Activated naive CD4-positive, alpha-beta T cell treated with anti-CD3 and anti-CD28 coated beads for 36 hours (primary cell): ENCODE measurements at regions of chr3 and their contacts with region 1.

Region 1: GRCh38 chr3:138915503-138916498 is 31.1 kb downstream of the FOXL2 start:
- DNase-seq: peak; percentile 89
- H3K4me3 Mint-ChIP-seq: peak overlapping the region; percentile 81
- H3K27ac Mint-ChIP-seq: peak overlapping the region; percentile 24
- H3K4me1 Mint-ChIP-seq: peaks cover 4% of the 10 kb centered on the region
- H3K27me3 Mint-ChIP-seq: no peaks in the 10 kb centered on the region

Region 2: GRCh38 chr3:138180375-138181029 is 735.3 kb before region 1 on chr3:
- CTCF ChIA-PET with region 1: interaction called, 7 read pairs
- intact Hi-C with region 1: loop called (anchors 1 kb)
- DNase-seq: peak; percentile 76
- H3K4me3 Mint-ChIP-seq: no peak overlapping the region
- H3K27ac Mint-ChIP-seq: no peak overlapping the region
- H3K4me1 Mint-ChIP-seq: peaks cover 3% of the 10 kb centered on the region
- H3K27me3 Mint-ChIP-seq: peaks cover 1% of the 10 kb centered on the region

Region 3: GRCh38 chr3:138479438-138479863 is 436.4 kb before region 1 on chr3:
- CTCF ChIA-PET with region 1: interaction called, 29 read pairs
- intact Hi-C with region 1: loop called (anchors 1 kb)
- DNase-seq: peak; percentile 65
- H3K4me3 Mint-ChIP-seq: no peak overlapping the region
- H3K27ac Mint-ChIP-seq: no peak overlapping the region
- H3K4me1 Mint-ChIP-seq: no peaks in the 10 kb centered on the region
- H3K27me3 Mint-ChIP-seq: no peaks in the 10 kb centered on the region

Region 4: DNA sequence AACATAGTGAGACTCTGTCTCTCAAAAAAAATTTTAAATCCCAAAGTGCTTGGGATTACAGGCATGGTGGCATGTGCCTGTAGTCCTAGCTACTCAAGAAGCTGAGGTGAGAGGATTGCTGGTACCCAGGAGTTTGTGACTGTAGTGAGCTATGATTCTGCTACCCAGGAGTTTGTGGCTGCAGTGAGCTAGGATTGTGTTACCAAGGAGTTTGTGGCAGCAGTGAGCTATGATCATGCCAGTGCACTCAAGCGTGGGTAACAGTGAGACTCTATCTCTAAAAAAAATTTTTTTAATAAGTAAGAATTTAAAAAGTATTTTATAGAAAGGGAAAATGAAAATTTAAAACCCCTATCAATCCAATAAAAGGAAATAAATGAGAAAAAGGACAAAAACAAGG is 237.7 kb before region 1 on chr3:
- CTCF ChIA-PET with region 1: interaction called, 14 read pairs
- intact Hi-C with region 1: no loop called
- DNase-seq: no peak
- H3K4me3 Mint-ChIP-seq: no peak overlapping the region
- H3K27ac Mint-ChIP-seq: no peak overlapping the region
- H3K4me1 Mint-ChIP-seq: no peaks in the 10 kb centered on the region
- H3K27me3 Mint-ChIP-seq: no peaks in the 10 kb centered on the region

Region 5: GRCh38 chr3:138717348-138717747 is 198.5 kb before region 1 on chr3:
- CTCF ChIA-PET with region 1: interaction called, 12 read pairs
- intact Hi-C with region 1: no loop called
- DNase-seq: no peak
- H3K4me3 Mint-ChIP-seq: no peak overlapping the region
- H3K27ac Mint-ChIP-seq: no peak overlapping the region
- H3K4me1 Mint-ChIP-seq: peaks cover 31% of the 10 kb centered on the region
- H3K27me3 Mint-ChIP-seq: no peaks in the 10 kb centered on the region

Region 6: GRCh38 chr3:138842483-138843188 is 73.2 kb before region 1 on chr3:
- CTCF ChIA-PET with region 1: interaction called, 15 read pairs
- intact Hi-C with region 1: no loop called
- DNase-seq: no peak
- H3K4me3 Mint-ChIP-seq: no peak overlapping the region
- H3K27ac Mint-ChIP-seq: no peak overlapping the region
- H3K4me1 Mint-ChIP-seq: no peaks in the 10 kb centered on the region
- H3K27me3 Mint-ChIP-seq: no peaks in the 10 kb centered on the region

Region 7: GRCh38 chr3:138935848-138936740 is 20.3 kb after region 1 on chr3:
- CTCF ChIA-PET with region 1: interaction called, 113 read pairs
- intact Hi-C with region 1: no loop called
- DNase-seq: peak; percentile 78
- H3K4me3 Mint-ChIP-seq: peak overlapping the region; percentile 71
- H3K27ac Mint-ChIP-seq: no peak overlapping the region
- H3K4me1 Mint-ChIP-seq: peaks cover 34% of the 10 kb centered on the region
- H3K27me3 Mint-ChIP-seq: peaks cover 70% of the 10 kb centered on the region

Region 8: DNA sequence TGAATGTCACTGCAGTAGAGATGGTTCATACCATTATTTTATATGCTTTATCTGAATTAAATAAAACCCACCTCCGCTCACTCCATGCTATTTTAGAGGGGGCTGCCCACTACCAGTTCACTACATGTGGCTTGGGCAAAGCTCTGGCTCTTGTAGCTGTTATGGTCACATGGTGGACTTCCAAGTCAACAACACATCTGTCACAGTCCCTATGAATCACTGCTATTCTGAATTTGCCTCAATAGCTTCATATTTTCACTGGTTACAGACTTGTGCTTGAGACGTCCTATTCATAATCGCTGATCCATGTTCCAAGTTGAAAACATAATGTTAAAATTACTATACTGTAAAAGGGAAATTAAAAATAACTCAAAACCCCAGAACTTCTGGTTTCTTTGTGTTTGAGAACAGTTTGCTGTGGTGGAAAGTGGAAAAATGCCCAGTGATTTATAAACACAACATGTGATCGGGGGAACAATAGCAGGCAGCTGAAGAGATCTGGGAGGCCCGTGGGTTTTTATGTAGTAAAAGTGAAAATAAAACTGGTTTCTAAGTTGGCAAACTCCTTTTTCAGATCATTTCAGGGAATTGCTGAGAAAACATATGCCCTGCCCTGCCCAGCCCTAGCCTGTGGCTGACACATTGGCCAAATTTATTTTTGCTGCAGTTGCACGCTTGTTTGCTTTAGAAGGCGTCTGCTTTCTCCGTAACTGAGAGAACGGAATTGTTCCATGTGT is 257.7 kb after region 1 on chr3:
- CTCF ChIA-PET with region 1: no interaction called
- intact Hi-C with region 1: no loop called
- DNase-seq: no peak
- H3K4me3 Mint-ChIP-seq: no peak overlapping the region
- H3K27ac Mint-ChIP-seq: no peak overlapping the region
- H3K4me1 Mint-ChIP-seq: peaks cover 3% of the 10 kb centered on the region
- H3K27me3 Mint-ChIP-seq: peaks cover 22% of the 10 kb centered on the region

Region 9: GRCh38 chr3:140308535-140308934 is 1392.7 kb after region 1 on chr3:
- CTCF ChIA-PET with region 1: no interaction called
- intact Hi-C with region 1: no loop called
- DNase-seq: no peak
- H3K4me3 Mint-ChIP-seq: no peak overlapping the region
- H3K27ac Mint-ChIP-seq: no peak overlapping the region
- H3K4me1 Mint-ChIP-seq: no peaks in the 10 kb centered on the region
- H3K27me3 Mint-ChIP-seq: peaks cover 7% of the 10 kb centered on the region